RWPE1 (cell line): ENCODE measurements at regions of chr7 and their contacts with region 1.

Region 1: DNA sequence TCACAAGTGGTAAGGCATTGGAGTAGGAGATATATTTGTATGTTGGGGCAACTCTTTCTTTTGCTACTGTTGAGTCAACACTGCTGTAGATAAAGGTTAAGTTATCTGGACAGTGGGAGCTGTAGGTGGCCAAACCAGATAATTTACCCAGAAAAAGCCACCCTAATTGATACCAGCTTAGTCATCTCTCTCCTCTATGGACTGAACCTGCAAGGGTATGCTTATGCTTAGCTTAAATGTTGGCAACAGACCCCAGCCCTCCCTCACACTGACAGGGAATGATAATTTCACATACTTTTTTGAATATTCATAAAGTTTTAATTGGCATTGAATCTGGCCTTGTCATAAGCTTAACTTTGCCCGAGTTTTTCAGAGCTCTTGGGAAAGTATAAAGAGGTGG is 66.3 kb downstream of the CREB5 start:
- DNase-seq: no peak
- H3K27ac ChIP-seq: no peak overlapping the region
- CTCF ChIP-seq: no peak

Region 2: DNA sequence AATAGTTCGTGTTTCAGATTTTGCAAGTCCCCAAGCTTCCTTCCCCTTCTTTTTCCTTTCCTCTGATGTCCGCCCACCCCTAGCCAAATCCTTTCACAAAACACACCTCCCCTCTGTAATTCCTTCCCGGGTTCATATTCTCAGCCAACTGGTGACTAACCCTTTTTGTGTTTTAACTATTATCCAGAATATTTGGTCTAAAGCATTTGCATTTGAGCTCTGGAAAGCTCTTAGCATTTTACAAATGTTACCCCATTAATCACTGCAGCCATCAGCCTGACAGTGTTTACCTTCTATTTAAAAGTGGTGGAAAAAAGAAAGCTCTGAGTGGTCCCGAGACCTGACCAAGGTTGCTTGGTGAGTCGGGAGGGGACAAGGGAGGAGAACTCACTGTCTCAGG is 72.7 kb after region 1 on chr7:
- CTCF ChIA-PET with region 1: interaction called, 10 read pairs
- POLR2A ChIA-PET with region 1: no interaction called
- DNase-seq: no peak
- H3K27ac ChIP-seq: no peak overlapping the region
- CTCF ChIP-seq: no peak

Region 3: GRCh38 chr7:28700790-28701203 is 222.1 kb after region 1 on chr7:
- CTCF ChIA-PET with region 1: no interaction called
- POLR2A ChIA-PET with region 1: no interaction called
- DNase-seq: no peak
- H3K27ac ChIP-seq: no peak overlapping the region
- CTCF ChIP-seq: no peak